Activated naive CD8-positive, alpha-beta T cell treated with anti-CD3 and anti-CD28 coated beads, Interleukin-2, amount 10 ng/mL, durations not matched to agents 7 days and 5 days (primary cell): ENCODE measurements at regions of chr2 and their contacts with region 1.

Region 1: DNA sequence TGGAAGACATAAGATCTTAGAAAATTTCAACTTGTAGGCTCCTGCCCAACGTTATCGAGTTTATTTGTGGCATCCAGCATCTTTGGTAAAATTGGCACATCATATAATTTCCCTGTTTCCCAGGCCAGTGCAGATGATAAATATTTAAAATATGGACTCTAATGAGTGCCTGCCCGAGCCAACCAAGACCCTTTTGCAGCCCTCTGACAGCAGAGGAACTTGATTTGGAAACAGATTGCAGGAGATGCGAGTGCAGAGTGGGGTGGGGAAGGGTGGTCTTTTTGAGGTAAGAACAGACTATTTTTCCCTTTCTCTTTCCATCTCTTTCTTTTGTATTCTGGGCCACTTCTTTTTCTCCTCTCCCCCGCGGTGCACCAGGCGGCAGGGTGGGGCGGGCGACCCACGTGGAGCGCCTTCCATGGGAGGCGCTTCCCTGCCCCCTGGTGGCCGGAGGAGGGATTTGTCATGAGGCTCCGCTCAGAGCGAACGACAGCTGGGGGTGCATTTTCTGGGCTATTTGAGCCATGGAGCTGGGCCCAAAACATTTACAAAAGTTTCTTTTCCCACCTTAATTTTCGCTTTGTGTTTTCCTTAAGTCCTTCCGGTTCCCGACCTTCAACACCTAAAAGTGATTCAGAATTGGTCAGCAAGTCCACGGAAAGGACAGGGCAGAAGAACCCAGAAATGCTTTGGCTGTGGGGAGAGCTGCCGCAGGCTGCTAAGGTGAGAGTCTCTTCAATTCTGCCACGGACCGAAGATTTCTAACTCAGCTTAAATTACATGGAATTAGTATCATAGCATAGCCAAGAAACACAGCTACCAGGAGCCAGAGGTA is 32.7 kb downstream of the LPIN1 start:
- DNase-seq: peak; percentile 88
- ATAC-seq: peak; percentile 84
- H3K4me3 Mint-ChIP-seq: peak overlapping the region; percentile 63
- H3K27ac Mint-ChIP-seq: peak overlapping the region; percentile 60
- H3K4me1 Mint-ChIP-seq: peaks cover 32% of the 10 kb centered on the region
- H3K27me3 Mint-ChIP-seq: no peaks in the 10 kb centered on the region

Region 2: DNA sequence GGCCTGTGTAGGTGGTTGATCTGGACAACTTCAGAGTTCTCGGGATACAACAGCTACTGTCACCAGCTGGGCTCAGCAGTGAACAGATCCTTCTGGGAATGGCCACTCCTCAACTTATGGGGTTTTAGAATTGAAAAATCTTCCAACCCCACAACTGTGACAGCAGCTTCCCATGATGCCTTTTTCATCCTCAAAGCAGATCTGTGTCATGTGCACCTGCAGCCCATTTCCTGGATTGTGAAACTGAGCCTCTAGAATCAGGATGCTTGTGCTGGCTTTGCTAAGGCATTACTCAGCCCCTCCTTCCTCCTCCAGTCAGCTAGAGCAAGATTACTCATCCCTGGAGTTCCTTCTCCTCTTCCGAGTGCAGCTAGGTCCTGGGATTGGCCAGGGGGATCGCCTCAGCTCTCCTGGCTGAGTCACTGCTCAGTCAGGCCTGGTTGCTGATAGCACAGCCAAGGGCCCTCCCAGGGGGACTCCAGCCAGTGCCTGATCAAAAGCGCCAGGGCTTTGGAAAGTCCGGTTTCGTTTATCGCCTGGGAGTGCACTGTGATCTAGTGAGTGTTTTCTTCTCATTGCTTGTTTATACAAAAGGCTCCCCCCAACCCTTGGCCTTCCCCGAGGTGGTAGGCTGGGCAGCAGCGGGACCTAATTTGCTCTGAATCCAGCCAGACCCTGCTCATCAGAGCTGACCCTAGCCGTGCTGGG is 35.1 kb before region 1 on chr2:
- POLR2A ChIA-PET with region 1: interaction called, 10 read pairs
- DNase-seq: peak; percentile 49
- ATAC-seq: no peak
- H3K4me3 Mint-ChIP-seq: peak overlapping the region; percentile 65
- H3K27ac Mint-ChIP-seq: peak overlapping the region; percentile 85
- H3K4me1 Mint-ChIP-seq: peaks cover 41% of the 10 kb centered on the region
- H3K27me3 Mint-ChIP-seq: peaks cover 2% of the 10 kb centered on the region

Region 3: DNA sequence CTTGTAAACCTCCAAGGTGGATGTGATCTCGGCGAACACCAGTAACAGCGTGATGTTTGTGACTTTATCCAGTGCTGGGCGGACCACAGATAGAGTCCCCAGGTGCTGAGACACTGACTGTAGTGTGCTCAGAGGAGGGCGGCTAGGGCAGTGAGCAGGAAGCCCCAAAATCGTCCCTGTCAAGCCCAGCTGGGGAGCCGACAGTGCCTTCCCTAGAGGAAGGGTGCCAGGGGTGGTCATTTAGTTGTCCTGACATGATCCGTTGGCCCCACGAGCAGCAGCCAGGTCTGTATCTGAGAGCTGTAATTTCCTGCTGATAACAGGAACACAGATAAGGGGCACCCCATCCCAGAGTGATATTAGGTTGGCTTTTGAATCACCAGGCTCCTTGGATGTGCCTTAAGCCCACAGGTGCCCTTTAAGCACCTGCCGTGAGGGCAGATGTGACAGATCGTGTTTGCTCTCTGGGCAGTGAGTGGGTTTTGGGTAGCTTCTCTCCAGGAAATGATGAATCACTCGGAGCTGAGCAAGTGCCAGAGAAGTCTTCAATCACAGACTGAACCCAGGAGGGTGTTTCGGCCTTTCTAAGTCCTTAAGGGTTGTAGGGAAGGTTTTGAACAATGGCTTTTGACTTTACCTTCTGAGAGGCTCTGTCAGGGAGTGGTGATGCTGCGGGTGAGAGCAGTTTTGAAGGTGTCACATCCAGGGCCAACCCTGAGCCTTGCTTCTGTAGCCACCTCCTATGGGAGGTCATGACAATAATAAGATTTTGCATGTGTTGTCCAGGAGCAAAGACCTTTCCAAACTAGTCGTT is 25.0 kb before region 1 on chr2:
- POLR2A ChIA-PET with region 1: interaction called, 18 read pairs
- DNase-seq: peak; percentile 57
- ATAC-seq: peak; percentile 66
- H3K4me3 Mint-ChIP-seq: peak overlapping the region; percentile 72
- H3K27ac Mint-ChIP-seq: peak overlapping the region; percentile 85
- H3K4me1 Mint-ChIP-seq: peaks cover 72% of the 10 kb centered on the region
- H3K27me3 Mint-ChIP-seq: no peaks in the 10 kb centered on the region

Region 4: DNA sequence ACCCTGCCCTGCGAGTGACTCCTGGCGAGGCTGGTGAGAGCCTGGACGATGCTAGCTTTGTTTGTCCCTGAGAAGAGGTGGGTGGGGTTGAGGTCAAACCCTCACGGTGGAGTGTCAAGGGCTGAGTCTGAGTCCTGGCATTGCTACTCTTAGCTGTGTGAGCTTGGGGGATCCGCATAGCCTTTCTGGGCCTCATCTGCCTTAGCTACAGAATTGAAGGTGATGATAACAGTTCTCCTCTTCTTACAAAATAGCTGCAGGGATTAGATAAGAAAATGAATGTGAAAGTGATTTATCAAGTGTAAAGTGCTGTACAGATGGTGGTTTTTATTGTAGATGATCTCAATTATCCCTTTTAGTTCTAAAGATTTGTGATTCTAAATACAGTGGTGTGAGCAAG is 111.9 kb after region 1 on chr2:
- POLR2A ChIA-PET with region 1: no interaction called
- DNase-seq: no peak
- ATAC-seq: no peak
- H3K4me3 Mint-ChIP-seq: no peak overlapping the region
- H3K27ac Mint-ChIP-seq: no peak overlapping the region
- H3K4me1 Mint-ChIP-seq: peaks cover 2% of the 10 kb centered on the region
- H3K27me3 Mint-ChIP-seq: peaks cover 2% of the 10 kb centered on the region